CD8-positive, alpha-beta T cell (primary cell): ENCODE measurements at regions of chr19 and their contacts with region 1.

Region 1: GRCh38 chr19:44890366-44891015 is 563 bp upstream of the TOMM40 start:
- DNase-seq: peak in 4 of 9 experiments; percentile 100
- ATAC-seq: peak; percentile 78
- H3K4me3 ChIP-seq: peak overlapping the region; percentile 58 to 76
- H3K4me3 Mint-ChIP-seq: peak overlapping the region; percentile 85
- H3K27ac ChIP-seq: peak overlapping the region; percentile 89 to 98
- H3K27ac Mint-ChIP-seq: peak overlapping the region; percentile 94
- H3K4me1 ChIP-seq: peaks cover 20% of the 10 kb centered on the region
- H3K4me1 Mint-ChIP-seq: peaks cover 27% of the 10 kb centered on the region
- H3K27me3 ChIP-seq: no peaks in the 10 kb centered on the region
- H3K27me3 Mint-ChIP-seq: no peaks in the 10 kb centered on the region
- CTCF ChIP-seq: no peak

Region 2: DNA sequence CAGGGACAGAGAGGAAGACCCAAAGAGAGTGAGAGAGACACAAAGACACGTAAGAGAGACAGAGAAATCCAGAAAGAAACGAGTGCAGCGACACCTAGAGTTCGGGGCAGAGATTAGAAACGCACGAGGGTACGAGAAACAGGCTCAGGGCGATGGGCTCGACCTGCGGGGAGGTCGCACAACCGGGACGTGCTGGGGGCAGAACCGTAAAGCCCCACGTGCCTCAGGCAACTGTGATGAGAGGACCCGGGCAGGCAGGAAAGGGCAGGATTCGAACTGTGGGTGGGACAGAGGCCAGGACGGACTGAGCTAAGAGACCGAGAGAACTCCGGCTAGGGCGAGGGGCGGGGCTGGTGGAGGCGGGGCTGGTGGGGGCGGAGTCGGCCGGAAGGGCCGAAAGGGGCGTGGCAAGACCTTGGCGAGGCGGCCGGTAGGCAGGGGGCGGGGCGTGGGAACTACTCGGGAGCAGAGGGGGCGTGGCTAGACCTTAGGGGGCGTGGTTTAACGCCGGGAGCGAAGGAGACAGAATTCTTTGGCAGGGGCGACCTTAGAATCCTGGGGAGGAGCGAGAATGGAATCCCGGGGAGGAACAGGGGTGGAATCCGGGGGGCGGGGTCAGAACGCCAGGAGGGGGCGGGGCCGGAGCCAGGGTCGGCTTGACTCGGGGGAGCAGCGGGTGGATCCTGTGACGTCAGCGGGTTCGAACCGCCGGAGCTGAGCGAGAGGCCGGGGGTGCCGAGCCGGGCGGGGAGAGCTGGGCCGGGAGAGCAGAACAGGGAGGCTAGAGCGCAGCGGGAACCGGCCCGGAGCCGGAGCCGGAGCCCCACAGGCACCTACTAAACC is 44.7 kb before region 1 on chr19 and contains the start of gene NECTIN2:
- CTCF ChIA-PET with region 1: interaction called, 3 read pairs
- POLR2A ChIA-PET with region 1: interaction called, 3 read pairs
- intact Hi-C with region 1: loop called (anchors 1 to 2 kb)
- DNase-seq: peak; percentile 47 to 85 (median 71)
- ATAC-seq: peak; percentile 68
- H3K4me3 ChIP-seq: peak within 1 kb of the TSS; percentile 39 to 46
- H3K4me3 Mint-ChIP-seq: peak within 1 kb of the TSS; percentile 96
- H3K27ac ChIP-seq: no peak within 1 kb of the TSS
- H3K27ac Mint-ChIP-seq: peak within 1 kb of the TSS; percentile 55
- H3K4me1 ChIP-seq: peaks cover 45% of the 10 kb centered on the region
- H3K4me1 Mint-ChIP-seq: peaks cover 26% of the 10 kb centered on the region
- H3K27me3 ChIP-seq: peaks cover 0 to 18% of the 10 kb centered on the region in 2 experiments
- H3K27me3 Mint-ChIP-seq: peaks cover 19% of the 10 kb centered on the region
- CTCF ChIP-seq: peak; percentile 36
- total RNA-seq, gene NECTIN2: 2.0 to 2.5 TPM

Region 3: DNA sequence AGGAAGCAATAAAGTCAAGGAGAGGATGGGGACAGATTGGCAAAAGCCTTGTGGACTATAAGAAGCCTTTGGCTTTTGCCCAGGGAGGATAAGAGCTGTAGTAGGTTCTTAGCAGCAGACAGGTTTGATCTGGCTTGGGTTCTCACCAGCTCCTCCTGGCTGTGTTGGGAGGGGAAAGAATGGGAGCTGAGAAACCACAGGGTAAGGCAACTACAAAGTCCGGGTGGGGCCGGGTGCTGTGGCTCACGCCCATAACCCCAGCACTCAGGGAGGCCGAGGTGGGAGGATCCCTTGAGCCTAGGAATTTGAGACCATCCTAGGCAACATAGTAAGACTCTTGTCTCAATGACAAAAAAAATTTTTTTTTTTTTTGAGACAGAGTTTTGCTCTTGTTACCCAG is 23.8 kb before region 1 on chr19:
- CTCF ChIA-PET with region 1: no interaction called
- POLR2A ChIA-PET with region 1: no interaction called
- intact Hi-C with region 1: no loop called
- DNase-seq: no peak
- ATAC-seq: no peak
- H3K4me3 ChIP-seq: no peak overlapping the region
- H3K4me3 Mint-ChIP-seq: no peak overlapping the region
- H3K27ac ChIP-seq: no peak overlapping the region
- H3K27ac Mint-ChIP-seq: no peak overlapping the region
- H3K4me1 ChIP-seq: no peaks in the 10 kb centered on the region
- H3K4me1 Mint-ChIP-seq: no peaks in the 10 kb centered on the region
- H3K27me3 ChIP-seq: no peaks in the 10 kb centered on the region
- H3K27me3 Mint-ChIP-seq: peaks cover 3% of the 10 kb centered on the region
- CTCF ChIP-seq: no peak

Region 4: GRCh38 chr19:44954824-44955586 is 64.5 kb after region 1 on chr19 and contains the start of gene CLPTM1:
- CTCF ChIA-PET with region 1: interaction called, 4 read pairs
- POLR2A ChIA-PET with region 1: interaction called, 4 read pairs
- intact Hi-C with region 1: loop called (anchors 1 kb)
- DNase-seq: peak; percentile 93 to 98 (median 96)
- ATAC-seq: peak; percentile 91
- H3K4me3 ChIP-seq: peak within 1 kb of the TSS; percentile 72 to 88
- H3K4me3 Mint-ChIP-seq: peak within 1 kb of the TSS; percentile 97
- H3K27ac ChIP-seq: peak within 1 kb of the TSS; percentile 76 to 92
- H3K27ac Mint-ChIP-seq: peak within 1 kb of the TSS; percentile 97
- H3K4me1 ChIP-seq: peaks cover 31% of the 10 kb centered on the region
- H3K4me1 Mint-ChIP-seq: peaks cover 56% of the 10 kb centered on the region
- H3K27me3 ChIP-seq: no peaks in the 10 kb centered on the region
- H3K27me3 Mint-ChIP-seq: no peaks in the 10 kb centered on the region
- CTCF ChIP-seq: no peak
- total RNA-seq, gene CLPTM1: 108 to 113 TPM

Region 5: GRCh38 chr19:45038931-45039893 is 148.7 kb after region 1 on chr19 and contains the start of gene CLASRP:
- CTCF ChIA-PET with region 1: no interaction called
- POLR2A ChIA-PET with region 1: no interaction called
- intact Hi-C with region 1: loop called (anchors 1 kb)
- DNase-seq: peak; percentile 73 to 94 (median 89)
- ATAC-seq: peak; percentile 89
- H3K4me3 ChIP-seq: peak within 1 kb of the TSS; percentile 86 to 89
- H3K4me3 Mint-ChIP-seq: peak within 1 kb of the TSS; percentile 93
- H3K27ac ChIP-seq: peak within 1 kb of the TSS; percentile 92 to 96
- H3K27ac Mint-ChIP-seq: peak within 1 kb of the TSS; percentile 90
- H3K4me1 ChIP-seq: peaks cover 23% of the 10 kb centered on the region
- H3K4me1 Mint-ChIP-seq: peaks cover 32% of the 10 kb centered on the region
- H3K27me3 ChIP-seq: no peaks in the 10 kb centered on the region
- H3K27me3 Mint-ChIP-seq: no peaks in the 10 kb centered on the region
- CTCF ChIP-seq: no peak
- total RNA-seq, gene CLASRP: 144 to 153 TPM

Region 6: GRCh38 chr19:45250832-45251451 is 360.5 kb after region 1 on chr19 and contains the start of gene MARK4:
- CTCF ChIA-PET with region 1: no interaction called
- POLR2A ChIA-PET with region 1: no interaction called
- intact Hi-C with region 1: loop called in 1 of 2 experiments (anchors 5 kb)
- DNase-seq: peak; percentile 17 to 83 (median 55)
- ATAC-seq: peak; percentile 69
- H3K4me3 ChIP-seq: peak within 1 kb of the TSS; percentile 66 to 68
- H3K4me3 Mint-ChIP-seq: peak within 1 kb of the TSS; percentile 93
- H3K27ac ChIP-seq: peak within 1 kb of the TSS; percentile 20 to 67
- H3K27ac Mint-ChIP-seq: peak within 1 kb of the TSS; percentile 72
- H3K4me1 ChIP-seq: peaks cover 39% of the 10 kb centered on the region
- H3K4me1 Mint-ChIP-seq: peaks cover 38% of the 10 kb centered on the region
- H3K27me3 ChIP-seq: no peaks in the 10 kb centered on the region
- H3K27me3 Mint-ChIP-seq: no peaks in the 10 kb centered on the region
- CTCF ChIP-seq: no peak
- total RNA-seq, gene MARK4: 17.2 to 19.9 TPM

Region 7: DNA sequence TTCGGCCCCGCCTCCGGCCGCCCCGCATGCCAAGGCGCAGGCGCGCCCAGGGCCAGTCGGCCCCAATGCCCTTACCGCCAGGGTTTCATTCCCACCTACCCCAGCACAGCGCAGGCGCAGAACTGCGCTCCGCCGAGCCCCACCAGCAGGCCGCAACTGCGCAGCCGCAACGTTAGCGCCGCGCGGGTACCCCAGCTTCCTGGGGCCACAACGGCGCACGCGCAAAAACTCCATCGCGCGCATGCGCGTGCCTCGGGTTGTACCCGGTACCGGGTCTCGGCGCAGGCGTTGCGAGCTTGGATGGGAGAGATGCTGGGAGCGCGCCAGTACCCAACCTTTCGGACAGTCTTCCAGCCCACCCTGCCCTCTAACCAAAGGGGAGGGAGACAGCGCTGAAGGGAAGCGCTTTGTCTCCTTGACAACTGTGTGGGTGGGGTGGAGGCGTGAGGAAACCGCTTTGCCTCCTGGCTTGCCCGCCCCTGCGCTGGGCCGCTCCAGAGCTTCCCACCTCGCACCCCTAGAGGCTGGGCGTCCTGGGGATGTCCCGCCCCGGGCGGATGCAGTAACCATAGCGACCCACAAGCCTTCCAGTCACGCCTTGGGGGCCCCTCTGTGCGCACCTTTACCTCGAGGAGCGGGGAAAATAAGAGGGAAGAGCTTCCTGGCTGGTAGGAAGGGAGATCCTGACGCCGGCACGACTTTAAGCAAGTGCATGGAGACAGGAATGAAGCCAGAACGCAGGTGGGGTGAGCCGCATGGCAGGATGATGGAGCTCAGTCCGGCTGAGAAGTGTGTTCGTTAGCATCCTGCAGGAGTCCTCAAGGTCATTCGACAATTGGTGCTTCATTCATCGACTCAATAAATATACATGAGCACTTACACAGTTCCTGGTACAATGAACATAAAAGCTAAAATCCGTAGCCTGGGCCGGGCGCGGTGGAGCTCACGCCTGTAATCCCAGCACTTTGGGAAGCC is 1012.4 kb after region 1 on chr19:
- CTCF ChIA-PET with region 1: no interaction called
- POLR2A ChIA-PET with region 1: no interaction called
- intact Hi-C with region 1: loop called in 1 of 2 experiments (anchors 2 kb)
- DNase-seq: peak; percentile 98 to 100 (median 99)
- ATAC-seq: peak; percentile 82
- H3K4me3 ChIP-seq: peak overlapping the region; percentile 76 to 83
- H3K4me3 Mint-ChIP-seq: peak overlapping the region; percentile 92
- H3K27ac ChIP-seq: peak overlapping the region; percentile 64 to 77
- H3K27ac Mint-ChIP-seq: peak overlapping the region; percentile 72
- H3K4me1 ChIP-seq: peaks cover 17% of the 10 kb centered on the region
- H3K4me1 Mint-ChIP-seq: peaks cover 26% of the 10 kb centered on the region
- H3K27me3 ChIP-seq: no peaks in the 10 kb centered on the region
- H3K27me3 Mint-ChIP-seq: no peaks in the 10 kb centered on the region
- CTCF ChIP-seq: no peak